Endothelial cell of umbilical vein (primary cell): ENCODE measurements at regions of chr6 and their contacts with region 1.

Region 1: GRCh38 chr6:154510143-154510905 is at the start of gene CNKSR3:
- DNase-seq: peak; percentile 96
- H3K4me3 ChIP-seq: peak within 1 kb of the TSS; percentile 64 to 79 (median 78)
- H3K27ac ChIP-seq: peak within 1 kb of the TSS; percentile 77
- H3K4me1 ChIP-seq: peaks cover 15% of the 10 kb centered on the region
- H3K27me3 ChIP-seq: no peaks in the 10 kb centered on the region
- CTCF ChIP-seq: peak in 1 of 2 donors; percentile 35
- POLR2A ChIP-seq: no peak
- total RNA-seq, gene CNKSR3: 11.0 and 15.6 TPM in 2 replicates

Region 2: GRCh38 chr6:154292890-154293398 is 217.4 kb before region 1 on chr6:
- CTCF ChIA-PET with region 1: no interaction called
- POLR2A ChIA-PET with region 1: interaction called, 3 read pairs
- dilution Hi-C with region 1: no loop called
- intact Hi-C with region 1: loop called (anchors 2 kb)
- DNase-seq: peak; percentile 85
- H3K4me3 ChIP-seq: peak overlapping the region in 1 of 3 experiments; percentile 16
- H3K27ac ChIP-seq: peak overlapping the region; percentile 85
- H3K4me1 ChIP-seq: peaks cover 22% of the 10 kb centered on the region
- H3K27me3 ChIP-seq: no peaks in the 10 kb centered on the region
- CTCF ChIP-seq: no peak
- POLR2A ChIP-seq: no peak

Region 3: GRCh38 chr6:154410619-154411072 is 99.7 kb before region 1 on chr6:
- CTCF ChIA-PET with region 1: interaction called, 3 read pairs
- POLR2A ChIA-PET with region 1: interaction called, 4 read pairs
- dilution Hi-C with region 1: no loop called
- intact Hi-C with region 1: loop called (anchors 1 kb)
- DNase-seq: peak; percentile 97
- H3K4me3 ChIP-seq: peak overlapping the region in 1 of 3 experiments; percentile 19
- H3K27ac ChIP-seq: peak overlapping the region; percentile 99
- H3K4me1 ChIP-seq: peaks cover 25% of the 10 kb centered on the region
- H3K27me3 ChIP-seq: no peaks in the 10 kb centered on the region
- CTCF ChIP-seq: no peak
- POLR2A ChIP-seq: no peak

Region 4: GRCh38 chr6:154441995-154442310 is 68.4 kb before region 1 on chr6:
- CTCF ChIA-PET with region 1: no interaction called
- POLR2A ChIA-PET with region 1: no interaction called
- dilution Hi-C with region 1: no loop called
- intact Hi-C with region 1: loop called (anchors 2 kb)
- DNase-seq: no peak
- H3K4me3 ChIP-seq: no peak overlapping the region
- H3K27ac ChIP-seq: no peak overlapping the region
- H3K4me1 ChIP-seq: no peaks in the 10 kb centered on the region
- H3K27me3 ChIP-seq: no peaks in the 10 kb centered on the region
- CTCF ChIP-seq: no peak
- POLR2A ChIP-seq: no peak

Region 5: GRCh38 chr6:154482858-154483257 is 27.5 kb before region 1 on chr6:
- CTCF ChIA-PET with region 1: interaction called, 4 read pairs
- POLR2A ChIA-PET with region 1: no interaction called
- dilution Hi-C with region 1: no loop called
- intact Hi-C with region 1: loop called (anchors 2 kb)
- DNase-seq: peak; percentile 95
- H3K4me3 ChIP-seq: no peak overlapping the region
- H3K27ac ChIP-seq: peak overlapping the region; percentile 27
- H3K4me1 ChIP-seq: peaks cover 13% of the 10 kb centered on the region
- H3K27me3 ChIP-seq: no peaks in the 10 kb centered on the region
- CTCF ChIP-seq: no peak
- POLR2A ChIP-seq: peak; percentile 67

Region 6: GRCh38 chr6:154661768-154662167 is 151.4 kb after region 1 on chr6:
- CTCF ChIA-PET with region 1: interaction called, 24 read pairs
- POLR2A ChIA-PET with region 1: no interaction called
- dilution Hi-C with region 1: no loop called
- intact Hi-C with region 1: loop called (anchors 1 kb)
- DNase-seq: peak; percentile 92
- H3K4me3 ChIP-seq: no peak overlapping the region
- H3K27ac ChIP-seq: peak overlapping the region; percentile 61
- H3K4me1 ChIP-seq: peaks cover 17% of the 10 kb centered on the region
- H3K27me3 ChIP-seq: no peaks in the 10 kb centered on the region
- CTCF ChIP-seq: peak; percentile 31 to 42
- POLR2A ChIP-seq: peak; percentile 29